ENCODE measurements at regions of chr22 and their contacts with region 1.

Region 1: GRCh38 chr22:36180038-36180880 is 19.7 kb upstream of the APOL3 start:
- DNase-seq: no peak
- H3K4me3 ChIP-seq: no peak overlapping the region
- CTCF ChIP-seq: peak; percentile 81

Region 2: DNA sequence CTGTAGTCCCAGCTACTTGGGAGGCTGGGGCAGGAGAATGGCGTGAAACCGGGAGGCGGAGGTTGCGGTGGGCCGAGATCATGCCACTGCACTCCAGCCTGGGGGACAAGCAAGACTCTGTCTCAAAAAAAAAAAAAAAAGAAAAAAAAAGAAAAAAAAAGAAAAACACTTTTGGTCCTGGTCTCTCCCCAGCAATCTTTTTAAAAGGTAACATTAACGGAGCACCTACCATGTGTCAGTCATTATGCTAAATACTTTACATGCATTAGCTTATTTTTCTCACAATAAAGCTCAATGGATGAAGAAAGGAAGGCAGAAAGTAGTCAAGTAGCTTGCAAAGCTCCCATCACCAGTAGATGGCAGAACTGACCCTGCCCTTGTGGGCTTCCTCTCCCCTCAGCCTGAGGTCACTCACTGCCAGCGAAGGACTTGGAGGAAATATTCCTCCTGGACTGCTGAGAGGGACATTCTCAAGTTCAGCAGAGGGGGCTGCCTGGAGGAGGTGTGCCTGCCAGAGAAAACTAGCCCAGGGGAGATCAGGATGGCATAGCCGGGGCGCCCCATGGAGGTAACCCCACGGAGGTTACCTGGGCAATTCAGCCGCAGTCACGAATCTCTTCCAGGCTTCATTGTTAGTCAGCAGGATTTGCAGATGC is 35.2 kb before region 1 on chr22:
- CTCF ChIA-PET with region 1: interaction called, 162 read pairs
- POLR2A ChIA-PET with region 1: no interaction called
- DNase-seq: no peak
- H3K4me3 ChIP-seq: no peak overlapping the region
- CTCF ChIP-seq: peak; percentile 72

Region 3: DNA sequence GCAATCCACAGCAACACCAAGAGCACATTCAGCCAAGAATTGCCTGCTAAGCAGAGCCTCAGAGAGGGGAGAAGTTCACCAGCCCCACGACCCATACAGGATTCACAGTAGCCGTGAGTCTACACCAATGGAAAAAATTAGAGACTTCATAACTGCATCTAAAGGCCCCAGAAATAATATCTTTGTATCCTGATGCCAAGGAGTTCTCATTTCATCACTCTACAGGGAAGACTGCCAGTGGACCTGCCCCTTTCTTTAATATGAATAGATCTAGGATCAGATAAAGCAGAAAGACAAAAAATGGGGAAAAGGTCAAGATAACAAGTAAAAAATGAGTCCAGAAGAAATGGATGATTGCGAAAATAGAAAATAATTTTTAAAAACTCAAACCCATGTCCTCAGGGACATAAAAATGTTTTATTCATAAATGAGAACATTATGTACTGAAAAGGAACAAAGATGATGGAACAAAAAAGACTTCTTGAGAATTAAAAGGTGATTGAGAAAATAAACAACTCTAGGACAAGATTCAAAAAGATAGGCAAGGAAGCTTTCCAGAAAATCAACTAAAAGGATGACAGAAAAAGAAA is 29.2 kb before region 1 on chr22:
- CTCF ChIA-PET with region 1: interaction called, 162 read pairs
- POLR2A ChIA-PET with region 1: no interaction called
- DNase-seq: no peak
- H3K4me3 ChIP-seq: no peak overlapping the region
- CTCF ChIP-seq: no peak

Region 4: DNA sequence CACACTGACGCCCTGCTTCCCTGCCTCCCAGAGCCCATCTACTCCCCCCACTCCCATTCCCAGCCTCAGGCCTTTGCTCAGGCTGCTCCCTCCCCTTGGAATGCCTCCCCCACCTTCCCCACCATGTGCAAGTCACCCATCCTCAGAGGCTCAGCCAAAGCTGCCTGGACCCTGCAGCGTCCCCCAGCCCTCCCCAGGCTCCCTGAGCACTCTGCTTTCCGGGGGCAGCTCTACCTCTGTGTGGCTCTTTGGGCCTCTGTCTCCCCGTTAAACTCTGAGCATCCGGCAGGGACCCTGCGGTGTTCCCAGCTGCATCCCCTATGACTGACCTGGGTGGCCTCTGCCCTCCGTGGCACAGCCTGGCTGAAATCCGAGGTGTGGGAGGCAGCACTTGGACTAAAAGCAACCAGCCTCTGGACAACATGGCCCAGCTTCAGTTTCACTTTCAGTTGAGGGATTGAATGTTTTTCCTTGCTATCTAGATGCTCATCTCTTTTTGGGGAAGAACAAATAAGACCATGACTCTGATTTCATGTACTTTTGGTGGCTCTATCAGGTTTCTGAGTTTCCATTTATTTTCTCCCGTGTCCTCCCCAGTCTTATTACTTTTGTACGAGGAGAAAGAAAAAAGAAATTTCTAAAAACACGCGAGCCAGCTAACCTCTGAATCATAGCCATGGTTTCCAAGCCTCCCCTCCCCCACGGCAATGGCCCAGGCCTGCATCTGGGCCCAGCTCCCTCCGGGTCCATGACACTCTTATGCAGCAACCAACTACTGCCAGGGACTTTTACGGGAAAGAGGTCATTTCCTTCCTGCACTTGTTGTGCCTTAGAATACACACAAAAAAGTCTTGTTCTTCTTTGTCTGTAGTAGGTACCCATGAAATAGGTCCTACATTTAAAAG is 23.5 kb before region 1 on chr22:
- CTCF ChIA-PET with region 1: interaction called, 125 read pairs
- POLR2A ChIA-PET with region 1: no interaction called
- DNase-seq: no peak
- H3K4me3 ChIP-seq: peak overlapping the region; percentile 49
- CTCF ChIP-seq: no peak

Region 5: GRCh38 chr22:36162127-36163034 is 17.9 kb before region 1 on chr22:
- CTCF ChIA-PET with region 1: interaction called, 125 read pairs
- POLR2A ChIA-PET with region 1: no interaction called
- DNase-seq: no peak
- H3K4me3 ChIP-seq: no peak overlapping the region
- CTCF ChIP-seq: no peak

Region 6: DNA sequence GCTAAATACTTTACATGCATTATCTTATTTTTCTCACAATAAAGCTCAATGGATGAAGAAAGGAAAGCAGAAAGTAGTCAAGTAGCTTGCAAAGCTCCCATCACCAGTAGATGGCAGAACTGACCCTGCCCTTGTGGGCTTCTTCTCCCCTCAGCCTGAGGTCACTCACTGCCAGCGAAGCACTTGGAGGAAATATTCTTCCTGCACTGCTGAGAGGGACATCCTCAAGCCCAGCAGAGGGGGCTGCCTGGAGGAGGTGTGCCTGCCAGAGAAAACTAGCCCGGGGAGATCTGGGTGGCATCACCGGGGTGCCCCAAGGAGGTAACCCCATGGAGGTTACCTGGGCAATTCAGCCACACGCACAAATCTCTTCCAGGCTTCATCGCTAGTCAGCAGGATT is 14.7 kb after region 1 on chr22:
- CTCF ChIA-PET with region 1: interaction called, 76 read pairs
- POLR2A ChIA-PET with region 1: no interaction called
- DNase-seq: no peak
- H3K4me3 ChIP-seq: no peak overlapping the region
- CTCF ChIP-seq: peak; percentile 65

Region 7: DNA sequence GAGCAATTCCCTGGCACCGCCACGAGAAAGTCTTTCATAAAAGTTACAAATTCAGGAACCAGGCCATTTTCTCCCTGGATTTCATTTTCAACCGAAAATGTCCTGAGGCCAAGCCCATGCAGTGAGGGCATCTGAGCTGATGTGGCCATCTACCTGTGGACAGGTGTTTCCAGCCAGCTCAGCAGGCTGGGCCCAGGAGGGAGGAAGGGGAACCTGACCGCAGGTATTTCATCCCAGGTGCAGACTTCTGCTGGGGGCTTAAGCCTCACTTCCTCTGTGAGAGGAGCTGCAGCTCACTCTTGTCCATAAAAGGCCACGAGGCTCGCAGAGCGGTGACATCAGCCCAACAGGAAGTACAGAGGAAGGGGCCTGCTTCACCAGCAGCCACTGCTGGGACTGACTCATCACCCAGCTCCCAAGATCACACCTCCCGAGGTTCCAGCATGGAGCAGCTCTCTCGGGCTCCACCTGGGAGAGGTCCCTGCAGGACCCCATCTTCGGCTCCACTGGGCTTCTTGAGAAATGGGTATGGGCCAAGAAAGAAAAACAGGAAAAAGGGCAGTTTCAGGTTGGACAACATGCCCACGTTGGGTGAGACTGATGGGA is 151.2 kb after region 1 on chr22:
- CTCF ChIA-PET with region 1: no interaction called
- POLR2A ChIA-PET with region 1: no interaction called
- DNase-seq: peak; percentile 86
- H3K4me3 ChIP-seq: no peak overlapping the region
- CTCF ChIP-seq: no peak

Region 8: DNA sequence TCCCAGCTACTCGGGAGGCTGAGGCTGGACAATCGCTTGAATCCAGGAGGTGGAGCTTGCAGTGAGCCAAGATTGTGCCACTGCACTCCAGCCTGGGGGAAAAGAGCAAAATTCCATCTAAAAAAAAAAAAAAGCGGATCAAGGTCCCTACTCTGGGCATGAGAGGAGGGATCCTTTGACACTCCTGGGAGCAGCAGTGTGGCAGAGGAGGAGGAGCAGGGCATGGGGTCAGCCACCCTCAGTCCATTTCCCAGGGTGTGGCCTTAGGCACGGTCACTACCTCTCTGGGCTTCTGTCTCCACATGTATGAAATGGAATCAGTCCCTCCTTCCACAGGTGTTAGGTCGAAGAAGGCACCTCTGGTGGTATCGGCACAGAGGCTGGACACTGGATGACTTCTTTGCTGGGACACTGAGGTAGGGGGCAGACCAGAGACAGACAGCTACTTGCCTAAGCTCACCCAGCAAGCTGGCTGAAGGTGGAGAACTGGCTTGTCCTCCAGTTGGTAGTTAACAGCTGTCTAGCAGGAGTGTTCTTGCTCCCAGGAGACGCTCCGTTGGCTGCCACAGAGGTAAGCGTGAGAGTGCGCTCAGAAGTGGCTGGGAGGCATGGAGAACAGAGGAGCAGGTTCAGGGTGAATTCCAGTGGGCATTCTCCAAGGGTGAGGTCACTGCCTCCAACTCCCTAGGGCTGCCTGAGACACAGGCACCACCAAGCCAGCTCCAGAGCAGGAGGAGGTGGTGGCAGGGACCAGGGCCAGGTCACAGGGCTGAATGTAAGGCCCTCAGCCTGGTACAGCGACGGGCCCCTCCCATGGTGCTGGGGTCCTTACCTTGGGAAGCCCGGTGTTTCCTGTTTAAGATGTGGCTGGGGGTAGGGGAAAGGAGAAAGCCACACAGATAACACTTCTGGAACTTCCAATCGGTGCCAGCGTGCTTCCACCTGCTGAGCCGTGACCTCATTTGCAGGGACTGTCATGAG is 281.7 kb after region 1 on chr22:
- CTCF ChIA-PET with region 1: no interaction called
- POLR2A ChIA-PET with region 1: no interaction called
- DNase-seq: peak; percentile 94
- H3K4me3 ChIP-seq: no peak overlapping the region; the same call in 1 of the 2 replicates
- CTCF ChIP-seq: no peak